CD8-positive, alpha-beta memory T cell (primary cell): ENCODE measurements at regions of chr21 and their contacts with region 1.

Region 1: DNA sequence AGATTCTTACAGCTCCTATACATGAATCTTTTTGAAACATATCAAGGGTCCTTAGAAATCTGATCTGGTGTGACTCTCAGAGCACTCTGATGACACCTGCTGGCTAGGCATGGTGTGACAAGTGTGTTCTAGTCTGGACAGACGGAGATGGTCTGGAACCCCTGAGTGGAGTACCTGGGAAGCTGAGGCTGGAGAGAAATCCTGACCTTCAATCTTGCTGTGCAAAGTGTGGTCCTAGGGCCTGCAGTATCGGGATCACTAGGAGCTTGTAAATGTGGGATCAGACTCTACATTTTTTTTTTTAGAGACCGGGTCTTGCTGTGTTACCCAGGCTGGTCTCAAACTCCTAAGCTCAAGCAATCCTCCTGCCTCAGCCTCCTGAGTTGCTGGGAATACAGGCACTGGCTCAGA is 78.6 kb upstream of the SOD1 start:
- DNase-seq: peak; percentile 30 to 74 (median 51)
- H3K4me3 ChIP-seq: no peak overlapping the region
- H3K4me3 Mint-ChIP-seq: no peak overlapping the region
- H3K27ac ChIP-seq: no peak overlapping the region
- H3K27ac Mint-ChIP-seq: peak overlapping the region in 1 of 8 donors; percentile 12
- H3K4me1 ChIP-seq: no peaks in the 10 kb centered on the region
- H3K4me1 Mint-ChIP-seq: peaks cover 0 to 4% (median 0%) of the 10 kb centered on the region in 3 donors
- H3K27me3 ChIP-seq: no peaks in the 10 kb centered on the region
- H3K27me3 Mint-ChIP-seq: peaks cover 1 to 13% of the 10 kb centered on the region in 2 donors

Region 2: GRCh38 chr21:31098576-31099005 is 482.3 kb before region 1 on chr21:
- CTCF ChIA-PET with region 1: interaction called, 26 read pairs
- POLR2A ChIA-PET with region 1: no interaction called
- DNase-seq: peak; percentile 34 to 69 (median 60)
- H3K4me3 ChIP-seq: no peak overlapping the region
- H3K4me3 Mint-ChIP-seq: peak overlapping the region in 4 of 7 donors; percentile 19 to 68 (median 42)
- H3K27ac ChIP-seq: no peak overlapping the region
- H3K27ac Mint-ChIP-seq: peak overlapping the region in 2 of 8 donors; percentile 21 to 39
- H3K4me1 ChIP-seq: peaks cover 17% of the 10 kb centered on the region
- H3K4me1 Mint-ChIP-seq: peaks cover 17 to 28% (median 24%) of the 10 kb centered on the region in 3 donors
- H3K27me3 ChIP-seq: no peaks in the 10 kb centered on the region
- H3K27me3 Mint-ChIP-seq: peaks cover 15 to 29% of the 10 kb centered on the region in 2 donors

Region 3: GRCh38 chr21:31103571-31104272 is 477.1 kb before region 1 on chr21:
- CTCF ChIA-PET with region 1: interaction called, 26 read pairs
- POLR2A ChIA-PET with region 1: no interaction called
- DNase-seq: no peak
- H3K4me3 ChIP-seq: no peak overlapping the region
- H3K4me3 Mint-ChIP-seq: peak overlapping the region in 1 of 7 donors; percentile 9
- H3K27ac ChIP-seq: no peak overlapping the region
- H3K27ac Mint-ChIP-seq: peak overlapping the region in 2 of 8 donors; percentile 30
- H3K4me1 ChIP-seq: peaks cover 14% of the 10 kb centered on the region
- H3K4me1 Mint-ChIP-seq: peaks cover 15 to 31% (median 21%) of the 10 kb centered on the region in 3 donors
- H3K27me3 ChIP-seq: no peaks in the 10 kb centered on the region
- H3K27me3 Mint-ChIP-seq: peaks cover 7 to 8% of the 10 kb centered on the region in 2 donors

Region 4: DNA sequence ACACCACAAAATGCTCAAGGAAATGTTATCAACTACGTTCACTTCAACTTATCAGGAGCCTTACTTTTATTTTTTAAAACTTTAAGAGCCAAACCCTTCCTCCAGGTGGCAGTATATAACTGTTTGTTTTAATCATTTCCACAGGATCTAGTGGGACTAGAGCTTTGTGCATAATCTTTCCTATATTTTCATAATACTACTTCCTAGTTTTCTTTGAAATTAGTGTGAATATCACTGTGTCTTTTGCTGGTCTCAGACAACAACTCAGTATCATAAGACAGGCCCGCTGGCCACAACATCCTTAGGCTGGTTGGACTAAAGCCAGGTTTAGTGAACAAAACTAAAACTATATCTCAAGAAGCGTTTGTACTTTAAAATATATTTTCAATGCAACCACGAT is 382.3 kb before region 1 on chr21:
- CTCF ChIA-PET with region 1: interaction called, 45 read pairs
- POLR2A ChIA-PET with region 1: no interaction called
- DNase-seq: peak in 2 of 5 donors; percentile 11 to 39
- H3K4me3 ChIP-seq: no peak overlapping the region
- H3K4me3 Mint-ChIP-seq: no peak overlapping the region
- H3K27ac ChIP-seq: no peak overlapping the region
- H3K27ac Mint-ChIP-seq: no peak overlapping the region
- H3K4me1 ChIP-seq: peaks cover 9% of the 10 kb centered on the region
- H3K4me1 Mint-ChIP-seq: peaks cover 8 to 34% (median 26%) of the 10 kb centered on the region in 3 donors
- H3K27me3 ChIP-seq: no peaks in the 10 kb centered on the region
- H3K27me3 Mint-ChIP-seq: peaks cover 6 to 23% of the 10 kb centered on the region in 2 donors

Region 5: GRCh38 chr21:31213795-31214194 is 367.1 kb before region 1 on chr21:
- CTCF ChIA-PET with region 1: interaction called, 12 read pairs
- POLR2A ChIA-PET with region 1: no interaction called
- DNase-seq: peak in 1 of 5 donors; percentile 13
- H3K4me3 ChIP-seq: no peak overlapping the region
- H3K4me3 Mint-ChIP-seq: no peak overlapping the region
- H3K27ac ChIP-seq: no peak overlapping the region
- H3K27ac Mint-ChIP-seq: no peak overlapping the region
- H3K4me1 ChIP-seq: no peaks in the 10 kb centered on the region
- H3K4me1 Mint-ChIP-seq: no peaks in the 10 kb centered on the region
- H3K27me3 ChIP-seq: no peaks in the 10 kb centered on the region
- H3K27me3 Mint-ChIP-seq: peaks cover 0 to 3% of the 10 kb centered on the region in 2 donors